Dendritic cell treated with granulocyte-macrophage colony-stimulating factor and Interleukin-4, amounts not matched to agents 40 ng/mL and 50 ng/mL, for 4 days (primary cell): ENCODE measurements at regions of chr1 and their contacts with region 1.

Region 1: DNA sequence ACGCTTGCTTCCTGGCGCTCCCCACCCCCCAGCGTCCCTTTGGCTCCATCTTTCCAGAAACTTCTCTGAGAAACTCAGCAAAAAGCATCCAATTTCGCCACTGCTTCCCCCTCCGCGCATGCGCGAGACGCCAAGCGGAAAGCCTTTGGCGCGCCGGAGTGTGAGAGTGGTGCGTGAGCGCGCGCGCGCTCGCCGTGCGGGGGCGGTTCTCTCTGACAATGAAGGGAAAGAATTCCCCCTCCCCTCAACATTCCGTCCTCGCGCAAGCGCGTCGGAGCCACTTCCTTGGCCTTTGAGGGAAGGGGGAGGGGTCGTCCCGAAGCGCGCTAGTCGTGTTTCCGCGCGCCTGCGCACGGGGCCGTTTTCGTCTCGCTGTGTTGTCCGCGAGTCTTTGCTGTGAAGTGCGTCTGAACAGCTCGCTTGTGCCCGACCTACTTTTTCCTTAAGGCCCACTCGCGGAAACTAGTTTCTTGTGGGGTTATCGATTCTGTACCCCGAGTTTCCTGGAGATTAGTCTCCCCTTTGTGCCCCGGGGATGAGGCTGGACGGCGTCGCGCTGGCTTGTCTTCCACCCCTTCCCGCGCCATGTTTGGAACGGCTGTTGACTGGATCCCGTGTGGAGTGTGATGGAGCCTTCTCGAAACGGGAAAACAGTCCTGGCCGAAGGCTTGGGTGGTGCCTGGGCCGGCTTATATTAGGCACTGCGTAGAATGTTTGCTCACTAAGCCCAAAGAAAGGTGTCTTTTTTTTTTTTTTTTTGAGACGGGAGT is 11.6 kb upstream of the SPEN start:
- H3K4me3 Mint-ChIP-seq: peak overlapping the region; percentile 85
- H3K27ac Mint-ChIP-seq: peak overlapping the region; percentile 98
- H3K4me1 Mint-ChIP-seq: peaks cover 30% of the 10 kb centered on the region
- H3K27me3 Mint-ChIP-seq: no peaks in the 10 kb centered on the region

Region 2: GRCh38 chr1:15885701-15886610 is 50.0 kb after region 1 on chr1:
- intact Hi-C with region 1: loop called (anchors 5 kb)
- H3K4me3 Mint-ChIP-seq: peak overlapping the region; percentile 74
- H3K27ac Mint-ChIP-seq: peak overlapping the region; percentile 93
- H3K4me1 Mint-ChIP-seq: peaks cover 63% of the 10 kb centered on the region
- H3K27me3 Mint-ChIP-seq: no peaks in the 10 kb centered on the region

Region 3: GRCh38 chr1:15937706-15938168 is 101.8 kb after region 1 on chr1:
- intact Hi-C with region 1: no loop called
- H3K4me3 Mint-ChIP-seq: no peak overlapping the region
- H3K27ac Mint-ChIP-seq: peak overlapping the region; percentile 71
- H3K4me1 Mint-ChIP-seq: peaks cover 18% of the 10 kb centered on the region
- H3K27me3 Mint-ChIP-seq: no peaks in the 10 kb centered on the region

Region 4: GRCh38 chr1:16226490-16227179 is 390.7 kb after region 1 on chr1:
- intact Hi-C with region 1: no loop called
- H3K4me3 Mint-ChIP-seq: no peak overlapping the region
- H3K27ac Mint-ChIP-seq: no peak overlapping the region
- H3K4me1 Mint-ChIP-seq: peaks cover 20% of the 10 kb centered on the region
- H3K27me3 Mint-ChIP-seq: peaks cover 56% of the 10 kb centered on the region